Prostate gland (tissue), 2 donors: ENCODE measurements at regions of chr1 and their contacts with region 1.

Region 1: GRCh38 chr1:61741711-61742619 is at the start of gene PATJ:
- DNase-seq: peak; percentile 91
- H3K4me3 ChIP-seq: peak within 1 kb of the TSS; percentile 82 to 96
- H3K27ac ChIP-seq: peak within 1 kb of the TSS; percentile 97
- H3K4me1 ChIP-seq: no peaks in the 10 kb centered on the region
- H3K27me3 ChIP-seq: no peaks in the 10 kb centered on the region
- CTCF ChIP-seq: no peak
- POLR2A ChIP-seq: peak; percentile 78
- total RNA-seq, gene PATJ: 42.7 to 67.5 TPM

Region 2: DNA sequence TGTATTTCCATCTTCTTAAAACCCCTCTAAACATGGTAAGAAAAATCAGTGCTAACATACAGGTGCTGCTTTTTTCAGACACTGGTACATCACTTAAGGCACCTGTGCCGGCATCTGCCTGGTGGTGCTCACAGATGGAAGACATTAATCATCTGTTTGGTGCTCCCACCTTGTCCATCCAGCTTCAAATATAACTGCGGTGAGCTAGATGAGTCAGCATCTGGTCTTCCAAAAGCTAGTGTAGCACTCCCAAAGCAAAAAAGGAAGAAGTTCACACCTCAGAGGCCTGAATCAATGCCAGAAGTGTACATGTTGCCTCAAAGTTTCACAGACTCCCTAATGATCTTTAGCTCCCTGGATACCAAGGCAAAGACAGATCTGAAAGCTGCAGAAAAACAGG is 61.5 kb before region 1 on chr1:
- intact Hi-C with region 1: no loop called
- DNase-seq: no peak
- H3K4me3 ChIP-seq: no peak overlapping the region
- H3K27ac ChIP-seq: no peak overlapping the region
- H3K4me1 ChIP-seq: no peaks in the 10 kb centered on the region
- H3K27me3 ChIP-seq: no peaks in the 10 kb centered on the region
- CTCF ChIP-seq: no peak
- POLR2A ChIP-seq: no peak

Region 3: DNA sequence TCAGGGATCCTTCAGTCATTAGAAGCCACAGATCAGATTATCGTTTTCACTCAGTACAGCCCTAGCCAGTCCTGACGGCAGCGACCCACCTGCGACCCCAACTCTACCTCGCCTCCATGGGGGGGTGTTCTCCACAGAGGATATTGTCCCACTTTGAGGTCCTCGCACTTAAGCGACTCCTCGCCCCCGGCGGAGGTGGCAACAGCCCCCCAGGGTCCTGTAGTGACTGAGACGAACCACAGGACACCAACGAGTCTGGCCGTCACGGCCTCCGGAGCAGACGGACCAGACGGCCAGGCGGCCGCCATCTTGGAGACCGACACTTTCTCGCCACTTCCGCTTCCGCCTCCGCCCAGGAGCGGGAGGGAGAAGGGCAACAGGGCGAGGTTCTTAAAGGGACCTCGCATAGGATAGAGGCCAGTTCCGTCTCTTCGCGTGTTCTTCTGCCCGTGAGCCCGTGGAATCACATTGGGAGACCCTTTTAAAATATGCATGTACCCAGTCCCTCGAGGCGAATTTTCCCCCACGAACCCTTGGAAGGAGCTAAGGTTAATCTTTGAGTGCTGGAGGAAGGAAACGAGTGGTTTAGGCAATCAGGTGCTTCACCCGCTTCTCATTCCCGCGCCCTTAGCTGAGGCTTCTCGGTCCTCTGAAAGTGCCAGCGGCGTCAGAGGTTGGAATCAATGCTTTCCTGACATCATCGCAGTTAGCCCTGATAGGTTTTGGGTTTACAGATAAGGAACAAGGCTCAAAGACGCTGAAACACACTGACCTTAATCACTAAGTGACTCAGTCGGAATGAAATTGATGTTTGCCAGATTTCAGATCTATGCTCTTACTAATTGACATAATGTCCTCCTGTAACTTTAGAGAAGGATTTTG is 16.9 kb before region 1 on chr1 and contains the start of gene TM2D1:
- intact Hi-C with region 1: loop called (anchors 2 kb)
- DNase-seq: peak; percentile 85
- H3K4me3 ChIP-seq: peak within 1 kb of the TSS; percentile 84 to 92
- H3K27ac ChIP-seq: peak within 1 kb of the TSS; percentile 88 to 91
- H3K4me1 ChIP-seq: no peaks in the 10 kb centered on the region
- H3K27me3 ChIP-seq: no peaks in the 10 kb centered on the region
- CTCF ChIP-seq: peak in 1 of 4 experiments; percentile 13
- POLR2A ChIP-seq: peak; percentile 78
- total RNA-seq, gene TM2D1: 59.6 to 86.9 TPM

Region 4: DNA sequence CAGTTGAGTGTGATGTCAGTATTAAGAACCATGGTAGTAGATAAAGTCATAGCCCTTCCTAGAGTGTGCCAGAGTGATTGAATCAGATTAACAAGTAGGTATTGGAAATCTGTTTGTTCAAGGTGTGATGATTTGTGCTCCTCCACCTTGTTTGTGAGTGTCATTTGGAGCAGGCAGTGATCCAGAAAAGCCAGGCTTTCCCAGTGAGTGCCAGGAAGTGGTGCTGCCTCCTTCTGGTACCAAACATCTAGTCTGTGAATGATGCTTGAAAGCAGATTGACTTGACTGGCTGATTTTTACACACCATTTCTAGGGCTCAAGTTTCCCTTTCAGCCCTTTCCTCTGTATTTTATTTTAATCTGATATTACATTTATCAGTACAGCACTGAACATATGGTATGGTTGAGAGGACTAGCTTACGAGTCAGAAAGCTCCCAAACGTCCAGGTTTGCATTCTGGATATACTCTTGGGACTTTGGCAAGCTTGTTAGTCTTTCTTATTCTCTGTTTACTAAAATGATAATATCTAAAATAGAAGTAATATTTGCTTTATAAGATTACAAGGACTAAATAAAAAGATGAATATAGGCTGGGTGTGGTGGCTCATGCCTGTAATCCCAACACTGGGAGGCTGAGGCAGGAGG is 101.0 kb after region 1 on chr1:
- intact Hi-C with region 1: loop called (anchors 5 kb)
- DNase-seq: peak; percentile 23
- H3K4me3 ChIP-seq: no peak overlapping the region
- H3K27ac ChIP-seq: peak overlapping the region; percentile 8 to 21
- H3K4me1 ChIP-seq: no peaks in the 10 kb centered on the region
- H3K27me3 ChIP-seq: no peaks in the 10 kb centered on the region
- CTCF ChIP-seq: peak in 1 of 4 experiments; percentile 16
- POLR2A ChIP-seq: no peak